ENCODE measurements at regions of chr7 and their contacts with region 1.

Region 1: GRCh38 chr7:27196287-27196767 is 3.6 kb downstream of the HOXA13 start:
- DNase-seq: peak; percentile 92
- H3K4me3 Mint-ChIP-seq: no peak overlapping the region
- H3K27ac Mint-ChIP-seq: no peak overlapping the region
- H3K4me1 Mint-ChIP-seq: peaks cover 31% of the 10 kb centered on the region
- H3K27me3 Mint-ChIP-seq: peaks cover 76% of the 10 kb centered on the region

Region 2: DNA sequence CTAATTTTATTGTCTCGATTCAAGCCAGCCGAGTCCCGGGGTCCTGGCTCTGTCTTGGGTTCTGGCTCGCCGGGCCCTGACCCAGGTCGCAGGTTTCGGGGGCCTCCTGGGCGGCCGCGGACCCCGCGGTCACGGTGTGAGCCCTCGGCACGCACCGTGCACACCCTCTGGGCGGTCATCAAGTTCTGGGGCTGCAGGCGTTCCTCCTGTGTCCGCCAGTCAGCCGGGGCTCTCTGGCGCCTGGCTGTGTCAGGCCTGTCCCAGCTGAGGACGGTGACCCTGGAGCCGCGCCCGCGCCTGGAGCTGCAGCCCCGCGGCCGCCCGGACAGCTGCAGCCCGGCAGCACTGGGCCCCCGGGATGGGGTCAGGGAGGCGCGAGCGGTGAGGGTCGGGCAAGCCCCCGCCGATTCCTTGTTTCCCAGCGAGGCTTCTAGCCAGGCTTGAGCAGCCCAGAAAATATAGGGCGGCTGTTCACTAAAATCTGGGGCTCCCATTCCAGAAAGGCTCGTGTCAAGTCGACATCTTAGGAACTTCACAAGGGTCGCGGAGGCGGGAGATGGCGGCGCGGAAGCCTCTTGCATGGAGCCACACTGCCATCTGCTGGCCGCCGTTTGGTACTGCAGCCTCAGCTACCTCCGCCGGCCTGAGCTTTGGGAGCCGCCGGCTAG is 35.6 kb before region 1 on chr7:
- CTCF ChIA-PET with region 1: interaction called, 4 read pairs
- intact Hi-C with region 1: loop called (anchors 5 kb)
- DNase-seq: peak; percentile 87
- H3K4me3 Mint-ChIP-seq: peak overlapping the region; percentile 57
- H3K27ac Mint-ChIP-seq: no peak overlapping the region
- H3K4me1 Mint-ChIP-seq: peaks cover 35% of the 10 kb centered on the region
- H3K27me3 Mint-ChIP-seq: peaks cover 77% of the 10 kb centered on the region

Region 3: GRCh38 chr7:27242555-27243339 is 46.4 kb after region 1 on chr7 and contains the start of gene EVX1:
- CTCF ChIA-PET with region 1: interaction called, 6 read pairs
- intact Hi-C with region 1: loop called (anchors 2 kb)
- DNase-seq: peak; percentile 78
- H3K4me3 Mint-ChIP-seq: peak within 1 kb of the TSS; percentile 58
- H3K27ac Mint-ChIP-seq: no peak within 1 kb of the TSS
- H3K4me1 Mint-ChIP-seq: peaks cover 25% of the 10 kb centered on the region
- H3K27me3 Mint-ChIP-seq: peaks cover 79% of the 10 kb centered on the region
- total RNA-seq, gene EVX1: not detected

Region 4: GRCh38 chr7:27662490-27663205 is 466.3 kb after region 1 on chr7 and contains the start of gene HIBADH:
- CTCF ChIA-PET with region 1: no interaction called
- intact Hi-C with region 1: loop called (anchors 2 kb)
- DNase-seq: peak; percentile 97
- H3K4me3 Mint-ChIP-seq: peak within 1 kb of the TSS; percentile 82
- H3K27ac Mint-ChIP-seq: peak within 1 kb of the TSS; percentile 69
- H3K4me1 Mint-ChIP-seq: peaks cover 14% of the 10 kb centered on the region
- H3K27me3 Mint-ChIP-seq: no peaks in the 10 kb centered on the region
- total RNA-seq, gene HIBADH: 20.8 to 22.5 TPM

Region 5: DNA sequence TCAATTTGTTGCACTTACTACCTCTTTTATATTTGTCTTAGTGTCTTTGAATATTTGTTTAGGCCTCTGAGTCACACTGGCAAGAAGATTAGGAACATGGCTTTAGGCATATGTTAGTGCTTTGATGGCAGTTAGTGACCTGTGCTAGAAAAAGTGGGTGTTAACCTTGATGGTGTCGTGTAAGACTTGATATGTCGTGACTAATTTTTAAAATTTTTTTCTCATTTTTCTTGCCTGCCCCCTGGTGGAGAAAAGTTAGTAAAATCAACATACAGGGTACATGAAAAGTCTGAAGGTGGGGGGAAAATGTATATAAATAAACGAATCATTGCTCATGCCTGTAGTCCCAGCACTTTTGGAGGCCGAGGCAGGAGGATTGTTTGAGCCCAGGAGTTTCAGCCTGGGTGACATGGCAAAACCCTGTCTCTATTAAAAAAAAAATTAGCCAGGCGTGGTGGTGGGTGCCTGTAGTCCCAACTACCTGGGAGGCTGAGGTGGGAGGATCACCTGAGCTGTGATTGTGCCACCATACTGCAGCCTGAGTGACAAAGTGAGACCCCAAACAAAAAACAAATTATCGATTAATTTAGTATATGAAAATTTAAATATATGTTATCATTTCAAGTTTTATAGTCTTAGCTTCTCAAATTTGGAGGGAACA is 588.2 kb after region 1 on chr7:
- CTCF ChIA-PET with region 1: interaction called, 5 read pairs
- intact Hi-C with region 1: loop called (anchors 2 kb)
- DNase-seq: peak; percentile 26
- H3K4me3 Mint-ChIP-seq: no peak overlapping the region
- H3K27ac Mint-ChIP-seq: no peak overlapping the region
- H3K4me1 Mint-ChIP-seq: peaks cover 37% of the 10 kb centered on the region
- H3K27me3 Mint-ChIP-seq: no peaks in the 10 kb centered on the region

Region 6: GRCh38 chr7:28020302-28020940 is 824.1 kb after region 1 on chr7:
- CTCF ChIA-PET with region 1: interaction called, 14 read pairs
- intact Hi-C with region 1: loop called (anchors 1 kb)
- DNase-seq: peak; percentile 60
- H3K4me3 Mint-ChIP-seq: no peak overlapping the region
- H3K27ac Mint-ChIP-seq: no peak overlapping the region
- H3K4me1 Mint-ChIP-seq: no peaks in the 10 kb centered on the region
- H3K27me3 Mint-ChIP-seq: no peaks in the 10 kb centered on the region

Region 7: DNA sequence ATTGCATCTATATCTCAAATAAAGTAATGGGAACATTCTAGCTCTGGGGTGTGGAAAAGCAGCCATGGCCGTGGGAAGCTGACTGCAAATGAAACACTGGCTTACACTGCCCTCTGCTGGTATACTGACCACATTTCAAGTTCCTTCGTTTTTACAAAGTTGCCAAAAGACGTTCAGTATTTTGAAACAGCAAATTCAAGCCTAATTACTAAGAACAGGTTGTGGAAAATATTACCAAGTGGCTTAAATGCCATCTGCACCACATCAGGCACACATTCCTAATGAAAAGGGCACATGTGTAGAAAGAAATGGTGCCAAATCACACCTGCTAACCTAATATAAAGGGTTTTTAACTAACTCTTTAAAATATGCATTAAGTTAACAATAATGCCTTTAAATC is 900.4 kb after region 1 on chr7:
- CTCF ChIA-PET with region 1: interaction called, 4 read pairs
- intact Hi-C with region 1: loop called (anchors 1 kb)
- DNase-seq: peak; percentile 57
- H3K4me3 Mint-ChIP-seq: no peak overlapping the region
- H3K27ac Mint-ChIP-seq: no peak overlapping the region
- H3K4me1 Mint-ChIP-seq: peaks cover 3% of the 10 kb centered on the region
- H3K27me3 Mint-ChIP-seq: no peaks in the 10 kb centered on the region

Measured in activated naive CD4-positive, alpha-beta T cell treated with anti-CD3 and anti-CD28 coated beads for 36 hours (primary cell).